ENCODE measurements at regions of chr12 and their contacts with region 1.

Region 1: GRCh38 chr12:53159195-53159839 is 21.2 kb upstream of the ZNF740 start:
- DNase-seq: peak in 1 of 2 experiments; percentile 97
- H3K4me3 ChIP-seq: peak overlapping the region in 1 of 4 experiments; percentile 45; a peak in 3 of 8 replicates
- H3K27ac ChIP-seq: no peak overlapping the region
- H3K4me1 ChIP-seq: peaks cover 0 to 3% (median 1%) of the 10 kb centered on the region in 4 experiments; a peak in 2 of 7 replicates
- H3K27me3 ChIP-seq: peaks cover 0 to 13% (median 7%) of the 10 kb centered on the region in 4 experiments; a peak in 5 of 7 replicates
- CTCF ChIP-seq: peak; percentile 96 to 100 (median 100)
- EP300 ChIP-seq: no peak
- POLR2A ChIP-seq: no peak
- RAD21 ChIP-seq: peak; percentile 81 to 87

Region 2: GRCh38 chr12:52787324-52788191 is 371.8 kb before region 1 on chr12:
- CTCF ChIA-PET with region 1: no interaction called
- POLR2A ChIA-PET with region 1: no interaction called
- DNase-seq: no peak
- H3K4me3 ChIP-seq: no peak overlapping the region
- H3K27ac ChIP-seq: no peak overlapping the region
- H3K4me1 ChIP-seq: no peaks in the 10 kb centered on the region
- H3K27me3 ChIP-seq: no peaks in the 10 kb centered on the region
- CTCF ChIP-seq: no peak
- EP300 ChIP-seq: no peak
- POLR2A ChIP-seq: no peak
- RAD21 ChIP-seq: no peak

Region 3: DNA sequence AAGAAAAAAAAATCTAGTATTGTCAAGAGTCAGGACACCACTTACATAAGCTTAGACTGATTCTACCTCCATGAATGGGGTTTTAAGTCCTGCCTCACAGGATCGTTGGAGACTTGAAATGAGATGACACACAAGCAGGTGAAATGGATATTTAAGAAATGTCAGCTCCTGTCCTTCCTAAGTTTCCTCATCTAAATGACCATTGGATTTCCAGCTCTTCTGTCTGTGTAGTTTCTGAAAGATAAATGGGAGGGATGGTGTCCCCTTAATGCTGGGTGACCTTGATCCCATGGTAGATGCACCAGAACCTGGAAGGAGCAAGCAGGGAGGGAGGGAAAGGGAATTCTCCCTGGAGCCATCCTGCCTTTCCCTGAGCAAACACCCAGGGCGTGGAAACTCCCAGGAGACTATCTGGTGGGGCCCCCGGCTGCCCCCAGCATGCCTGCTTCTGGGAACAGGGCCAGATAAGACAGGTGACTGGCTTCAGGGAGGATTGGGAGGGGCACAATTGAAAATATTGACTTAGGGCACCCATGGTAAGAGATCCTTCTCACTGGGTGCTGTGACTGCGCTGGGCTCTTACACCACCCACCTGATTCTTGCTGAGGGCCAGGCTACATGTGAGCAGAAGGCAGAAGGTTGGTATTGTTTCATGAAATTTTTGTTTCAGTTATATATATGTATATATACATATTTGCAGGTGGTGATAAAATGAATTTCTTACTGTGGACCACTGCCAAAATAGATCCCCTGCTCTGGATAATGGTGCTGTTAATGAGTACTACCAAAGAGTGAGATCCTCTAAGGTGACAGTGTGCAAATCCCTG is 264.0 kb before region 1 on chr12:
- CTCF ChIA-PET with region 1: no interaction called
- POLR2A ChIA-PET with region 1: no interaction called
- DNase-seq: no peak
- H3K4me3 ChIP-seq: no peak overlapping the region
- H3K27ac ChIP-seq: no peak overlapping the region
- H3K4me1 ChIP-seq: no peaks in the 10 kb centered on the region
- H3K27me3 ChIP-seq: no peaks in the 10 kb centered on the region
- CTCF ChIP-seq: no peak
- EP300 ChIP-seq: no peak
- POLR2A ChIP-seq: no peak
- RAD21 ChIP-seq: no peak

Region 4: DNA sequence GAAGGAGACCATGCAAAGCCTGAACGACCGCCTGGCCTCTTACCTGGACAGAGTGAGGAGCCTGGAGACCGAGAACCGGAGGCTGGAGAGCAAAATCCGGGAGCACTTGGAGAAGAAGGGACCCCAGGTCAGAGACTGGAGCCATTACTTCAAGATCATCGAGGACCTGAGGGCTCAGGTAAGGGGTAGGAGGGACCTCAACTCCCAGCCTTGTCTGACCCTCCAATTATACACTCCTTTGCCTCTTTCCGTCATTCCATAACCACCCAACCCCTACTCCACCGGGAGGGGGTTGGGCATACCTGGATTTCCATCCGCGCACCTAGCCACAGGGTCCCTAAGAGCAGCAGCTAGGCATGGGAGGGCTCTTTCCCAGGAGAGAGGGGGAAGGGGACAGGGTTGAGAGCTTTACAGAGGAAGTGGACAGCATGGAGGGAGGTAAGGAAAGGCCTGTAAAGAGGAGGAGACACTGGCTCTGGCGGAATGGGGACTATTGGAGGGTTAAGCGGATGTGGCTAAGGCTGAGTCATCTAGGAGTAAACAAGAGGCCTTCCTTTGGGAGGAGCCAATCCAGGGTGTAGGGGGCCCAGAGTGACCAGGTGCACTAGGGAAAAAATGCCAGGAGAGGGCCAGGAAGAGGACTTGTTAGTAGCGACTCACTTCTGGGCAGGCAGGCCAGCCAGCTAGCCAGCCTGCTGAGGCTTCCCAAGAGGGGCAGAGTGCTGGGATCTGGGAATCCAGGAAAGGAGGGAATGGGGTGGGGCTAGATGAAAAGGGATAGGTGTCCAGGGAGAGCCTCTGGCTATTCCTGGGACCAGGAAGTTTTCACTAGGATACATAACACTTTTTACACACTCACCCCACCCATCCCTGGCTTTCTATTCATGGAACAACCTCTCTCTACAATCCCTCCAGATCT is 209.6 kb before region 1 on chr12:
- CTCF ChIA-PET with region 1: no interaction called
- POLR2A ChIA-PET with region 1: no interaction called
- DNase-seq: peak in 1 of 2 experiments; percentile 62
- H3K4me3 ChIP-seq: peak overlapping the region; percentile 88 to 98 (median 93)
- H3K27ac ChIP-seq: peak overlapping the region; percentile 83
- H3K4me1 ChIP-seq: peaks cover 18 to 38% (median 29%) of the 10 kb centered on the region in 4 experiments
- H3K27me3 ChIP-seq: no peaks in the 10 kb centered on the region
- CTCF ChIP-seq: no peak
- EP300 ChIP-seq: no peak
- POLR2A ChIP-seq: peak; percentile 73 to 85
- RAD21 ChIP-seq: peak in 1 of 2 experiments; percentile 3; a peak in 1 of 4 replicates

Region 5: DNA sequence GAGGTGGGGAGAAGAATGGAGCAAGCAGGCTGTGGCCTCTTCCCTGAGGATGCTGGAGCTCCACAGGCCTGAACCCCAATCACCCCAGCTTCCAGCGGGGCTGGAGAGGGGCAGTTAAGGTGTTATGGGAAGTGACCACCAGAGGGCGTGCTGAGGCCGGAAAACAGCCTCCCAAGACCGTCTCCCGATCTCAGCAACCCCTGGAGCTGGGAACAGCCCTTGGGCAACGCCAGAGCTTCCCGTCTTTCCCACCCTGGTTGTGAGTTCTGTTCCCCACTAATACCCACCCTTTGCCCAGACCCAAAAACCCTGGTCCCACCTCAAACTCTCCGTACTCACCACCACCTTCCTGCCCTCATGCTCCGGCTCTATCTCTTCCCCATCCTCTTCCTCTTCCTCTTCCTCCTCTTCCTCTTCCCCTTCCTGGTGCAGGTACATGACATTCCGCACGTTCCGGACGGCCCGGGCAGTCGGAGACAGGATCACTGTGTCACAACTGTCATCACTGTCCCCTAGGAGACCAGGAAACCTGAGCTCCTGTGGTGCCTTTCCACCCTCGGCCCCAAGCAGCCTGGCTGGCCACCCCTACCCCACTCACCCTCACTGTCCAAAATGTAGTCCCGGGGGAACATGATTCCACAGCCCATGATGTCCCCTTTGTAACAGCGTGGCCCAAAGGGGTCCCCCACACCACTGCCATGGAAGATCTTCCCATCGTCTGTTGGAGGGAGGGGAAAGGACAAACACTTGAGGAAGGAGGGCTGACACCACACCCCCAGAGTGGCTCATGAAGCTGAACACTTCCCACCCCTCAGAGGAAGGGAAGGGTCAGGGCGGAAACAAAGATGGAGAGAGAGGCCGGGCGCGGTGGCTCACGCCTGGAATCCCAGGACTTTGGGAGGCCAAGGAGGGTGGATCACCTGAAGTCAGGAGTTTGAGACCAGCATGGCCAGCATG is 93.1 kb before region 1 on chr12:
- CTCF ChIA-PET with region 1: interaction called, 78 read pairs
- POLR2A ChIA-PET with region 1: interaction called, 4 read pairs
- DNase-seq: peak in 1 of 2 experiments; percentile 93
- H3K4me3 ChIP-seq: no peak overlapping the region
- H3K27ac ChIP-seq: no peak overlapping the region
- H3K4me1 ChIP-seq: peaks cover 4 to 23% (median 6%) of the 10 kb centered on the region in 4 experiments
- H3K27me3 ChIP-seq: peaks cover 0 to 2% (median 0%) of the 10 kb centered on the region in 4 experiments; a peak in 2 of 7 replicates
- CTCF ChIP-seq: peak in 2 of 3 experiments; percentile 94 to 97; a peak in 3 of 4 replicates
- EP300 ChIP-seq: no peak
- POLR2A ChIP-seq: no peak
- RAD21 ChIP-seq: peak; percentile 96 to 97

Region 6: DNA sequence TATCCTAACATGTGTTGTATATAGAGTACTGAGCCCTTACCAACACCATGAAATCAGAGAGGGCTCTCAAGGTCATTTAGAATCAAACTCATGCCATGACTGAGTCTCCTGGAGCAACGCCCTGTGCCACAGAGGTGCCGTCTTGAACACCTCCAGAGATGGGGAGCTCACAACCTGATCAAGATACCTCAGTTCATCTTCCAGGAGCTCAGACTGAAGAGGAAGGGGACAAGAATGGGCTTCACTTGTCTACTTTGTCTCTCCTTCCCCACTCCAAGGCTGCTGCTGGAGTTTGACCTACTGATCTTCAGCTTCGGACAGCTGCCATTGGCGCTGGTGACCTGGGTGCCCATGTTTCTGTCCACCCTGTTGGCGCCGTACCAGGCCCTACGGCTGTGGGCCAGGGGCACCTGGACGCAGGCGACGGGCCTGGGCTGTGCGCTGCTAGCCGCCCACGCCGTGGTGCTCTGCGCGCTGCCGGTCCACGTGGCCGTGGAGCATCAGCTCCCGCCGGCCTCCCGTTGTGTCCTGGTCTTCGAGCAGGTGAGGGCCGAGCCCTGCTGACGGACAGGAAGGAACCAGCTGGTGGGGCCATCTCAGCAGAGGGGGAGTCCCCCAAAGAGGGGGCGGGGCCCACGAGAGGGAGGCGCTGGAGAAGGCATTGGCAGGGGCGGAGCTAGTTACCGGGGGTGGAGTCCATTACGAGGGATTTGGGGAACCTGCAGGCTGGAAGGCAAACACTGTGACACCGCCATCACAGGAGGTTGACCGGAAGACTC is 44.0 kb before region 1 on chr12:
- CTCF ChIA-PET with region 1: interaction called, 10 read pairs
- POLR2A ChIA-PET with region 1: interaction called, 3 read pairs
- DNase-seq: peak; percentile 38 to 90
- H3K4me3 ChIP-seq: no peak overlapping the region
- H3K27ac ChIP-seq: no peak overlapping the region
- H3K4me1 ChIP-seq: peaks cover 0 to 3% (median 2%) of the 10 kb centered on the region in 4 experiments; a peak in 3 of 7 replicates
- H3K27me3 ChIP-seq: no peaks in the 10 kb centered on the region
- CTCF ChIP-seq: no peak
- EP300 ChIP-seq: no peak
- POLR2A ChIP-seq: no peak
- RAD21 ChIP-seq: no peak

Region 7: GRCh38 chr12:53174881-53175491 is 15.7 kb after region 1 on chr12:
- CTCF ChIA-PET with region 1: interaction called, 80 read pairs
- POLR2A ChIA-PET with region 1: interaction called, 18 read pairs
- DNase-seq: no peak
- H3K4me3 ChIP-seq: no peak overlapping the region
- H3K27ac ChIP-seq: no peak overlapping the region
- H3K4me1 ChIP-seq: peaks cover 1 to 9% (median 5%) of the 10 kb centered on the region in 4 experiments; a peak in 4 of 7 replicates
- H3K27me3 ChIP-seq: peaks cover 14 to 74% (median 57%) of the 10 kb centered on the region in 4 experiments
- CTCF ChIP-seq: peak in 2 of 3 experiments; percentile 64 to 66; a peak in 3 of 4 replicates
- EP300 ChIP-seq: no peak
- POLR2A ChIP-seq: no peak
- RAD21 ChIP-seq: peak; percentile 56 to 62

Region 8: DNA sequence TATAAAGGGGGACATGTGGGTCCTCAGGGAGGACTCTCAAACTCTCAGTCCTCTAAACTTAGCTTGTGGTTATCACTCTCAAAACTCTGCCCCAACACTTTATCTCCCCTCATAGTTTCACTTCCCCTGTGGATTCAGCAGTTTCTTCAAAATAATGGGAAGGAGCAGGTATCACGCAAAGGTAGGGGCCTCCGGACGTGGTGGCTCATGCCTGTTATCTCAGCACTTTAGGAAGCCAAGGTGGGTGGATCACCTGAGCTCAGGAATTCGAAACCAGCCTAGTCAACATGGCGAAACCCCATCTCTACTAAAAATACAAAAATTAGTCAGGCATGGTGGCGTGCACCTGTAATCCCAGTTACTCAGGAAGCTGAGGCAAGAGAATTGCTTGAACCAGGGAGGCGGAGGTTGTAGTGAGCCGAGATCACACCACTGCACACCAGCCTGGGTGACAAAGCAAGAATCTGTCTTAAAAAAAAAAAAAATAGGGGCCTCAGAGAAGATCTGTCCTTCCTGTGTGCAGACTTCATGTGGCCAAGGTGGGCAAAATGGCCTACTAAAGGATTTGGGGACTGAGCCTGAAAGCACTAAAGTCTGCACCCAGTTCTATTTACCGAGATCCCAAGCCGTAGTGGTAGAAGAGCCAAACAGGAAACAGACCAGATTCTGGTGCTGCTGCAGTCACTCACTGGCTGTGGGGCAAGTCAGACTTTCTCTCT is 41.3 kb after region 1 on chr12:
- CTCF ChIA-PET with region 1: interaction called, 101 read pairs
- POLR2A ChIA-PET with region 1: interaction called, 8 read pairs
- DNase-seq: no peak
- H3K4me3 ChIP-seq: no peak overlapping the region
- H3K27ac ChIP-seq: no peak overlapping the region
- H3K4me1 ChIP-seq: no peaks in the 10 kb centered on the region; a peak in 1 of 7 replicates
- H3K27me3 ChIP-seq: peaks cover under 1 to 27% (median 16%) of the 10 kb centered on the region in 4 experiments
- CTCF ChIP-seq: no peak
- EP300 ChIP-seq: no peak
- POLR2A ChIP-seq: no peak
- RAD21 ChIP-seq: no peak

Region 9: GRCh38 chr12:53267999-53268647 is 108.8 kb after region 1 on chr12 and contains the start of gene ESPL1:
- CTCF ChIA-PET with region 1: interaction called, 13 read pairs
- POLR2A ChIA-PET with region 1: no interaction called
- DNase-seq: peak; percentile 54 to 92
- H3K4me3 ChIP-seq: peak within 1 kb of the TSS; percentile 82 to 97 (median 90)
- H3K27ac ChIP-seq: no peak within 1 kb of the TSS
- H3K4me1 ChIP-seq: peaks cover 3 to 11% (median 5%) of the 10 kb centered on the region in 4 experiments; a peak in 5 of 7 replicates
- H3K27me3 ChIP-seq: peaks cover 0 to 2% (median 0%) of the 10 kb centered on the region in 4 experiments; a peak in 1 of 7 replicates
- CTCF ChIP-seq: peak; percentile 41 to 61 (median 50)
- EP300 ChIP-seq: no peak
- POLR2A ChIP-seq: no peak
- RAD21 ChIP-seq: peak; percentile 63 to 69
- total RNA-seq, gene ESPL1: 47.0 and 52.7 TPM in 2 replicates

Region 10: GRCh38 chr12:53305515-53305914 is 146.2 kb after region 1 on chr12:
- CTCF ChIA-PET with region 1: no interaction called
- POLR2A ChIA-PET with region 1: no interaction called
- DNase-seq: no peak
- H3K4me3 ChIP-seq: no peak overlapping the region
- H3K27ac ChIP-seq: no peak overlapping the region
- H3K4me1 ChIP-seq: peaks cover 0 to under 1% (median 0%) of the 10 kb centered on the region in 4 experiments; a peak in 2 of 7 replicates
- H3K27me3 ChIP-seq: no peaks in the 10 kb centered on the region
- CTCF ChIP-seq: no peak
- EP300 ChIP-seq: no peak
- POLR2A ChIP-seq: 0 out of 3 replicates have a peak, but pooled peaks of 1 of the 2 experiments have one; percentile 4
- RAD21 ChIP-seq: no peak